Activated CD8-positive, alpha-beta T cell treated with anti-CD3 and anti-CD28 coated beads, Interleukin-2, amount 10 ng/mL, durations not matched to agents 7 days and 5 days (primary cell): ENCODE measurements at regions of chr14 and their contacts with region 1.

Region 1: GRCh38 chr14:39034481-39035296 is 68.3 kb downstream of the SEC23A start:
- DNase-seq: no peak
- ATAC-seq: no peak
- H3K4me3 Mint-ChIP-seq: no peak overlapping the region
- H3K27ac Mint-ChIP-seq: no peak overlapping the region
- H3K4me1 Mint-ChIP-seq: peaks cover 14% of the 10 kb centered on the region
- H3K27me3 Mint-ChIP-seq: no peaks in the 10 kb centered on the region

Region 2: GRCh38 chr14:39015360-39015961 is 19.2 kb before region 1 on chr14:
- CTCF ChIA-PET with region 1: interaction called, 10 read pairs
- POLR2A ChIA-PET with region 1: no interaction called
- DNase-seq: peak; percentile 40
- ATAC-seq: no peak
- H3K4me3 Mint-ChIP-seq: no peak overlapping the region
- H3K27ac Mint-ChIP-seq: no peak overlapping the region
- H3K4me1 Mint-ChIP-seq: no peaks in the 10 kb centered on the region
- H3K27me3 Mint-ChIP-seq: no peaks in the 10 kb centered on the region